ENCODE measurements at regions of chr10 and their contacts with region 1.

Region 1: DNA sequence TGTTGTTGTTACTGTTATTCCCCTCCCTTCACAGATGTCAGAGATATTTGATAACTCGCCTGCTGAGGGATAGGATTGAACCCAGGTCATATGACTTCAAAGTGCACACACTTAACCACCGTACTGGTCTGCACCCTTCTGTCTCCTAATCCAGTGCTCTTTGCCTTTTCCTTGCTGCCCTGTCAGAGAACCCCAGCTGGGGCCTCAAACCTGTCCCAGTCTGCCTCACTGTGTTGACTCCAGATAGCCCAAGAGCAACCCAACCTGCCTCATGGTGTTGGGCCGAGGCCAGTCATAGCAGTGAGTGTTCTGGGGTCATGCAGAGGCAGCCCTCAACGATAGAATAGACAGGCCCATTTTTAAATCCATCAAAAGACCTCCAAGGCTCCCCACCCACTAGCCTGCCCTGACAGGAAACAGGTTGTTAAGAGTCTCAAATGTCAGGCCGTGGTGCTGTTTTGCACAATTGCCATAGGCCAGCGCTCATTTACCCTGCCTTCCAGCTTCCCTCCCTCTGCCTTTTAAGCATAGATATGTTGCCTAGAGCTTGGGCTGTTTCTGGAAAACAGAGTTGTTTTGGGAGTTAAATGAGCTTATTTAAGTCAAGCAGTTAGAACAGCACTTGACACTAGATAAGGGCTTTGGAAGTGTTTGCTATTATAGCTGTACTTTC is 37.0 kb upstream of the PDCD4 start:
- DNase-seq: peak in 7 of 9 donors; percentile 51 to 77 (median 69)
- ATAC-seq: peak; percentile 81
- H3K4me3 ChIP-seq: no peak overlapping the region
- H3K4me3 Mint-ChIP-seq: peak overlapping the region in 9 of 10 donors; percentile 13 to 84 (median 63)
- H3K27ac ChIP-seq: peak overlapping the region; percentile 66
- H3K27ac Mint-ChIP-seq: peak overlapping the region; percentile 82 to 98 (median 97)
- H3K4me1 ChIP-seq: peaks cover 0 to 39% of the 10 kb centered on the region in 2 donors
- H3K4me1 Mint-ChIP-seq: peaks cover 18 to 67% (median 45%) of the 10 kb centered on the region in 7 donors
- H3K27me3 ChIP-seq: no peaks in the 10 kb centered on the region
- H3K27me3 Mint-ChIP-seq: no peaks in the 10 kb centered on the region

Region 2: GRCh38 chr10:110820321-110820814 is 14.4 kb before region 1 on chr10:
- CTCF ChIA-PET with region 1: no interaction called
- POLR2A ChIA-PET with region 1: interaction called, 7 read pairs
- intact Hi-C with region 1: loop called in 1 of 2 experiments (anchors 1 kb)
- DNase-seq: no peak
- ATAC-seq: no peak
- H3K4me3 ChIP-seq: no peak overlapping the region
- H3K4me3 Mint-ChIP-seq: no peak overlapping the region
- H3K27ac ChIP-seq: no peak overlapping the region
- H3K27ac Mint-ChIP-seq: peak overlapping the region in 5 of 9 donors; percentile 19 to 59 (median 33)
- H3K4me1 ChIP-seq: peaks cover 0 to 18% of the 10 kb centered on the region in 2 donors
- H3K4me1 Mint-ChIP-seq: peaks cover 17 to 45% (median 27%) of the 10 kb centered on the region in 7 donors
- H3K27me3 ChIP-seq: no peaks in the 10 kb centered on the region
- H3K27me3 Mint-ChIP-seq: peaks cover 0 to 7% (median 0%) of the 10 kb centered on the region in 5 donors

Region 3: GRCh38 chr10:110852255-110852896 is 17.6 kb after region 1 on chr10:
- CTCF ChIA-PET with region 1: interaction called, 16 read pairs
- POLR2A ChIA-PET with region 1: interaction called, 63 read pairs
- intact Hi-C with region 1: no loop called
- DNase-seq: peak in 1 of 9 donors; percentile 47
- ATAC-seq: no peak
- H3K4me3 ChIP-seq: no peak overlapping the region
- H3K4me3 Mint-ChIP-seq: peak overlapping the region; percentile 52 to 73 (median 62)
- H3K27ac ChIP-seq: peak overlapping the region; percentile 33
- H3K27ac Mint-ChIP-seq: peak overlapping the region; percentile 43 to 88 (median 78)
- H3K4me1 ChIP-seq: peaks cover 63 to 79% of the 10 kb centered on the region in 2 donors
- H3K4me1 Mint-ChIP-seq: peaks cover 46 to 81% (median 79%) of the 10 kb centered on the region in 7 donors
- H3K27me3 ChIP-seq: no peaks in the 10 kb centered on the region
- H3K27me3 Mint-ChIP-seq: no peaks in the 10 kb centered on the region

Region 4: DNA sequence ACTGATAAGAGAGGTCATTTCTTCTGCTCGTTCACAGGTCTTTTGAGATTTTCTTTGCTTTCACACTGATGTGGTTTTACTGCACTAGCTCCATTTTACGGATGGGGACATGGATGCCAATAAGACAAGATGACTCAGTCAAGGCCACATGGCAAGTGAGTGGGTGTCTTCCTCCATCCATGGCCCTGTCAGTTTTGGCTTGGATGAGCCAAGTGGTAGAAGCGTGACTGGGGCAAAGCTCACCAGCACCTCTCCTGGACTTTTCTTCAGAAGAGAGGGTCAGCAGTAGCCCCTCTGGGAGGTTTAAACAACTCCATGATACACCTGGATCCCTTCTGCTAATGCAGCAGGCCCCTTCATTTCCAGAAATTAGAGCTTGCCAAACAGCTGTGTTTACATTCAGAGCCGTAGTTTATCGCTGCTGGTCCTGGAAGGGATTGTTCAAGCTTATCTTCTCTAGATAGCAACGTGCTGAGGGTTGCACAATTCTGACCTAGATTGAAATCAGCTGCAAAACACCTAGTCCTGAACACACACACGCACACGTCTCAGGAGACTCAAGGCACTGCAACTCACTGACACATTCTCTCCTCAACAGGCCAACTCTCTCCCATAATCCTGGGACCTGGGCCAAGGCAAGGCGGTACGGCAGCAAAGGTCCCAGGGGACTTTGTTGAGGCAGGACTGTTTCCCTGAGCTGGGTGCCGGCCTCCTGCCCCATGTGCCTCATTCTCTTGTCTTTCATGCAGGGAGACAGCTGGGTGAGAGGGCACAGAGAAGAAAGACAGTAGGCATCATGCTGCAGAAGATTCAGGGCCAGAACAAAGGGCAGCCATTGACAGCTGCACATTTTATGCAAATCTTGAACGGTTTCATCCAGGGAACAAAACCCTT is 22.7 kb after region 1 on chr10:
- CTCF ChIA-PET with region 1: interaction called, 16 read pairs
- POLR2A ChIA-PET with region 1: interaction called, 63 read pairs
- intact Hi-C with region 1: no loop called
- DNase-seq: no peak
- ATAC-seq: peak; percentile 19
- H3K4me3 ChIP-seq: no peak overlapping the region
- H3K4me3 Mint-ChIP-seq: peak overlapping the region in 9 of 10 donors; percentile 29 to 79 (median 65)
- H3K27ac ChIP-seq: peak overlapping the region; percentile 83
- H3K27ac Mint-ChIP-seq: peak overlapping the region; percentile 67 to 100 (median 97)
- H3K4me1 ChIP-seq: peaks cover 81 to 89% of the 10 kb centered on the region in 2 donors
- H3K4me1 Mint-ChIP-seq: peaks cover 54 to 92% (median 88%) of the 10 kb centered on the region in 7 donors
- H3K27me3 ChIP-seq: no peaks in the 10 kb centered on the region
- H3K27me3 Mint-ChIP-seq: no peaks in the 10 kb centered on the region

Region 5: GRCh38 chr10:110893559-110894179 is 58.9 kb after region 1 on chr10:
- CTCF ChIA-PET with region 1: interaction called, 4 read pairs
- POLR2A ChIA-PET with region 1: no interaction called
- intact Hi-C with region 1: loop called in 1 of 2 experiments (anchors 1 kb)
- DNase-seq: peak in 6 of 9 donors; percentile 47 to 75 (median 66)
- ATAC-seq: peak; percentile 91
- H3K4me3 ChIP-seq: no peak overlapping the region
- H3K4me3 Mint-ChIP-seq: peak overlapping the region in 3 of 10 donors; percentile 2 to 34 (median 6)
- H3K27ac ChIP-seq: peak overlapping the region; percentile 56
- H3K27ac Mint-ChIP-seq: peak overlapping the region in 7 of 9 donors; percentile 2 to 68 (median 32)
- H3K4me1 ChIP-seq: peaks cover 0 to 20% of the 10 kb centered on the region in 2 donors
- H3K4me1 Mint-ChIP-seq: peaks cover 10 to 66% (median 51%) of the 10 kb centered on the region in 7 donors
- H3K27me3 ChIP-seq: no peaks in the 10 kb centered on the region
- H3K27me3 Mint-ChIP-seq: no peaks in the 10 kb centered on the region